Adrenal gland (tissue), 19 donors: ENCODE measurements at regions of chr12 and their contacts with region 1.

Region 1: GRCh38 chr12:92796650-92797049 is 93.9 kb downstream of the PLEKHG7 start:
- DNase-seq: no peak
- H3K4me3 ChIP-seq: no peak overlapping the region
- H3K27ac ChIP-seq: no peak overlapping the region
- H3K4me1 ChIP-seq: no peaks in the 10 kb centered on the region
- H3K27me3 ChIP-seq: no peaks in the 10 kb centered on the region
- CTCF ChIP-seq: no peak
- POLR2A ChIP-seq: no peak

Region 2: DNA sequence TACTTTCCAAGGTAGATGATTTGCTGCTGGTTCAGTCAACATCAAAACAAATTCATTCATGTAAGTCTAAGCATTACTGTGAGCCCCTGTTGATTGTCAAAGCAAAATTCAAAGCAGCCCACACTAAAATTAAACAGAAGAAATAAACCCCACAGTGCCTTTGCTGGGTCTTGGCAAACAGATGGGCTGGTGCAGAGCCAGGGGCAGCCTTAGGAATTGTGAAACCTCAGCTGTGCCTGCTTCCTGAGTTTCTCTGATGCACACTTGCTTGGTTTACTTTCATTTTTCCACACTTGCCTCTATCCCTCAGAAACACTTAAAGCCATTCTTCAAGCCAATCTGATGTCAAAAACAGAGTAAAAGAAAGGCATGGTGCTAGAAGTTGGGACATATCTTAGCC is 100.4 kb before region 1 on chr12:
- intact Hi-C with region 1: no loop called
- DNase-seq: peak in 6 of 7 donors; percentile 31 to 66 (median 47)
- H3K4me3 ChIP-seq: no peak overlapping the region
- H3K27ac ChIP-seq: no peak overlapping the region
- H3K4me1 ChIP-seq: no peaks in the 10 kb centered on the region
- H3K27me3 ChIP-seq: no peaks in the 10 kb centered on the region
- CTCF ChIP-seq: no peak
- POLR2A ChIP-seq: no peak

Region 3: DNA sequence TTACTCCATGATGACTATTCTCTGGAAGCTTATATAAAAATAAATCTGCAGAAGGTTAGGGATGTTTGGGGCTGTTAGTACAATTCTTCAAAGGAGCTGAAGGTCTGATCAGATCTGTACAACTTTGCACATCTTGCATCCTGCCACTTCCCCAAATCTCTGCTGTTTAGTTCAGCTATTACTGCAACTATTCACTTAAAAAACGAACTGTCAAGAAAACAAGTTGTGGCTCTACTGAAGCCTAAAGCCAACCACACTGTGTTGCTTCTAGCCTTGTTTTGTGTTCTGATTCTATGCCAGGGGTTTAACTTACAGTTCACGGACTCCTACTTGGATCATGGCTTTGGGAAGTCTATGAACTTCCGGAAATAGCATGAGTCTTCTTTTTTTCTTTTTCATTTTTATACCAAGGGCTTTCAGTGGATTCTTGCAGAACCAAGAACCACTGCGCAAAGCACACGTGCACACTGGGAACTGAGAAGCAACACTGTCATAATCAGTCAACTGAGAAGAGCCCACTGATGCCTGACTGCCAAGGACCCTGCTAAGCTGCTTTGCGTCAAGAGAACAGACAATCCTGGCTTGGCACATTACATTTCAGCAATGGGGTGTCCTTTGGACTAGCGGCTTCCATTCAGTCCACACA is 198.7 kb after region 1 on chr12:
- intact Hi-C with region 1: no loop called
- DNase-seq: no peak
- H3K4me3 ChIP-seq: no peak overlapping the region
- H3K27ac ChIP-seq: no peak overlapping the region
- H3K4me1 ChIP-seq: no peaks in the 10 kb centered on the region
- H3K27me3 ChIP-seq: no peaks in the 10 kb centered on the region
- CTCF ChIP-seq: no peak
- POLR2A ChIP-seq: no peak

Region 4: DNA sequence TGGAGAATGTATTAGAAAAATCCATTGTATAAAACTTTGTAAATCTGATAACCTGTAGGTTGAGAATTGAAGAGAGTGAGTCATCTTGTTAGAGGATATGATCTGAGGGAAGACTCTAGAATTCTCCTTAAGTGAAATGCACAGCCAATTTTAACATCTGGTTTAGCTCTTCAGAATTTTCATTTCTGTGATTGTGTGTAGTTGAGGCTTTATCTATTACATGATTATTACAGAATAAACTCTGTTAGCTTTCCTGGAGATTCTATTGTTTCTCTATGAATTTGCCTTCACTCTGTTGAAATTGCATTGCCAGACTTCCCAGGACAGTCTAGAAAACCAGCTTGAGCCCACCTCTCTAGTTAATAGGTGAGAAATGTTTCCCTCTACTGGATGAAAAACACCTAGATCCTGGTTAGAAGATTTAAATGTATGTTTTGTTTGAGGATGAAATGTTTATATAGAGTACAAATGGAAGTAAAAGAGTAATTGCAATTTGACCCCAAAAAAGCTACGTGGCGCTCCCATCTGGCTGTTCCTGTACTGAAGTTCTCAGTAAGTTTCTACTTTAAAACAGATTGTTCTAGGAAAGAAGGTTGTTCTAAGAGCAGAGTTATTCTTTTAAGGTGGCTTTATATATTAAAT is 584.0 kb after region 1 on chr12:
- intact Hi-C with region 1: loop called in 1 of 2 experiments (anchors 10 kb)
- DNase-seq: no peak
- H3K4me3 ChIP-seq: peak overlapping the region in 2 of 4 donors; percentile 63 to 69
- H3K27ac ChIP-seq: peak overlapping the region; percentile 83 to 94 (median 91)
- H3K4me1 ChIP-seq: peaks cover 25 to 63% of the 10 kb centered on the region in 2 donors
- H3K27me3 ChIP-seq: no peaks in the 10 kb centered on the region
- CTCF ChIP-seq: peak in 1 of 6 experiments; percentile 18
- POLR2A ChIP-seq: no peak